Prostate gland (tissue), 2 donors: ENCODE measurements at regions of chr18 and their contacts with region 1.

Region 1: DNA sequence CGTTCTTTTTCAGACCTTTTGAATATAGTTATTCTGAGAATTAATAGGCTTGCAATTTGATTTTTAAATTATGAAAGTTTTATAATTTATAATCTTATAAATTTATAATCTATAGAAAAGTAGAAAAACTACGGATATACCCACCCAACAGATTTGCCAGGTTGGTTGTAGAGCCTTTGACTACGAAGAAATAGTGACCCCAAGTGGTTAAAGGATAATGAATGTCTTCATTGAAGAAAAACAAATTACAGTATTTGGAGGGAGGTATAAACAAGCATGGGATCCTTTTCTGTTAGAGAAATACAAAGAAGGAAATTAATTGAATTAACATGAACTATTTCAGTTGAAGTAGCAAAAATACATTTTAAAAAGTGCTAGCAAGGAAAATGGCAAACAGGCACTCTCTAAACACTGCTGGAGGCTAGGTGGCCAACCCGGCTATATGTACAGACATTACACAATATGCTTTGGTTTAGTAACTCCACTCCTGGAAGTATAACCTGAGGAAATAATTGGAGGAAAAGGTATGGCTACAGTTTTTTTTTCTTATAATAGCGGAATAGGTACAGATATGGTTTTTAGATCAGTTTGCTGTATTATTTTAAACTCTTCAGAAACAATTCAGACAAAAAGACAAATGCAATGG is 110.9 kb downstream of the MIB1 start:
- DNase-seq: no peak
- H3K4me3 ChIP-seq: no peak overlapping the region
- H3K27ac ChIP-seq: no peak overlapping the region
- H3K4me1 ChIP-seq: no peaks in the 10 kb centered on the region
- H3K27me3 ChIP-seq: no peaks in the 10 kb centered on the region
- CTCF ChIP-seq: peak in 3 of 4 experiments; percentile 22 to 31 (median 25)
- POLR2A ChIP-seq: no peak

Region 2: GRCh38 chr18:21612125-21612991 is 239.1 kb before region 1 on chr18 and contains the start of gene SNRPD1:
- intact Hi-C with region 1: loop called (anchors 10 kb)
- DNase-seq: peak; percentile 72
- H3K4me3 ChIP-seq: peak within 1 kb of the TSS; percentile 54 to 57
- H3K27ac ChIP-seq: peak within 1 kb of the TSS; percentile 67 to 70
- H3K4me1 ChIP-seq: no peaks in the 10 kb centered on the region
- H3K27me3 ChIP-seq: no peaks in the 10 kb centered on the region
- CTCF ChIP-seq: peak; percentile 82 to 95 (median 95)
- POLR2A ChIP-seq: peak; percentile 34
- total RNA-seq, gene SNRPD1: 6.0 TPM

Region 3: GRCh38 chr18:21815101-21815500 is 36.3 kb before region 1 on chr18:
- intact Hi-C with region 1: loop called (anchors 5 kb)
- DNase-seq: no peak
- H3K4me3 ChIP-seq: no peak overlapping the region
- H3K27ac ChIP-seq: no peak overlapping the region
- H3K4me1 ChIP-seq: no peaks in the 10 kb centered on the region
- H3K27me3 ChIP-seq: no peaks in the 10 kb centered on the region
- CTCF ChIP-seq: no peak
- POLR2A ChIP-seq: no peak

Region 4: GRCh38 chr18:21933931-21934765 is 82.7 kb after region 1 on chr18:
- intact Hi-C with region 1: no loop called
- DNase-seq: no peak
- H3K4me3 ChIP-seq: no peak overlapping the region
- H3K27ac ChIP-seq: no peak overlapping the region
- H3K4me1 ChIP-seq: no peaks in the 10 kb centered on the region
- H3K27me3 ChIP-seq: no peaks in the 10 kb centered on the region
- CTCF ChIP-seq: no peak
- POLR2A ChIP-seq: no peak

Region 5: GRCh38 chr18:22020127-22020866 is 168.8 kb after region 1 on chr18:
- intact Hi-C with region 1: no loop called
- DNase-seq: no peak
- H3K4me3 ChIP-seq: no peak overlapping the region
- H3K27ac ChIP-seq: no peak overlapping the region
- H3K4me1 ChIP-seq: no peaks in the 10 kb centered on the region
- H3K27me3 ChIP-seq: no peaks in the 10 kb centered on the region
- CTCF ChIP-seq: no peak
- POLR2A ChIP-seq: no peak